Left ventricle myocardium superior (tissue), 1 donor: ENCODE measurements at regions of chr12 and their contacts with region 1.

Region 1: GRCh38 chr12:101127521-101128219 is 82.4 kb downstream of the SLC5A8 start:
- DNase-seq: no peak
- ATAC-seq: no peak

Region 2: GRCh38 chr12:101216808-101217207 is 89.1 kb after region 1 on chr12:
- intact Hi-C with region 1: loop called (anchors 5 kb)
- DNase-seq: no peak
- ATAC-seq: no peak

Region 3: GRCh38 chr12:101327021-101327420 is 199.4 kb after region 1 on chr12:
- intact Hi-C with region 1: no loop called
- DNase-seq: no peak
- ATAC-seq: no peak